ENCODE measurements at regions of chr7 and their contacts with region 1.

Region 1: DNA sequence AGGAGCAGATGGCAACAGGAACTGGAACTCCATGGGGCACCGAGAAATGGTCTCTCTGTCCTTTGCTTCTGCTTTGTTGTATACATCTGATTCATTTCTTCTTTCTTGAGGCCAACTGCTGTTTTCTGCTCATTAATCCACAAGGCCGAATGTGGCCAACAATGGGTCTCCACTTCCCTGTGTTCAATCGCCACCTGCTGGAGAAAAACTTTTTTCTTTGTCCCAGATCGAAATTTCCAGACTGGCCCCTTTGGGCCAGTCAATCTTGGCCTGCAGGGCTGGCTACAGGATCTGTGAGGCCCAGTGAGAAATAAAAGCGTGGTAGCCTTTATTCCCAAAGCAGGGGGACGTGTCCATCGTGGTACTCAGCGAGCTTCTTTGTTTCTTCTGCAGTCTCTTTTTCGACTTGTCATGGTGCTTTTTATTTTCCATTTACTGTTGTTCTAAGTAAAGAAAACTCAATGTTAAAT is 58.8 kb downstream of the PARP12 start:
- DNase-seq: peak; percentile 19
- H3K4me3 Mint-ChIP-seq: no peak overlapping the region
- H3K27ac Mint-ChIP-seq: no peak overlapping the region
- H3K4me1 Mint-ChIP-seq: no peaks in the 10 kb centered on the region
- H3K27me3 Mint-ChIP-seq: no peaks in the 10 kb centered on the region

Region 2: GRCh38 chr7:139431010-139431409 is 572.9 kb before region 1 on chr7:
- intact Hi-C with region 1: loop called (anchors 10 kb)
- DNase-seq: no peak
- H3K4me3 Mint-ChIP-seq: no peak overlapping the region
- H3K27ac Mint-ChIP-seq: no peak overlapping the region
- H3K4me1 Mint-ChIP-seq: peaks cover 6% of the 10 kb centered on the region
- H3K27me3 Mint-ChIP-seq: no peaks in the 10 kb centered on the region

Region 3: GRCh38 chr7:139502226-139502625 is 501.7 kb before region 1 on chr7:
- intact Hi-C with region 1: loop called (anchors 2 kb)
- DNase-seq: no peak
- H3K4me3 Mint-ChIP-seq: no peak overlapping the region
- H3K27ac Mint-ChIP-seq: no peak overlapping the region
- H3K4me1 Mint-ChIP-seq: peaks cover 3% of the 10 kb centered on the region
- H3K27me3 Mint-ChIP-seq: no peaks in the 10 kb centered on the region

Region 4: DNA sequence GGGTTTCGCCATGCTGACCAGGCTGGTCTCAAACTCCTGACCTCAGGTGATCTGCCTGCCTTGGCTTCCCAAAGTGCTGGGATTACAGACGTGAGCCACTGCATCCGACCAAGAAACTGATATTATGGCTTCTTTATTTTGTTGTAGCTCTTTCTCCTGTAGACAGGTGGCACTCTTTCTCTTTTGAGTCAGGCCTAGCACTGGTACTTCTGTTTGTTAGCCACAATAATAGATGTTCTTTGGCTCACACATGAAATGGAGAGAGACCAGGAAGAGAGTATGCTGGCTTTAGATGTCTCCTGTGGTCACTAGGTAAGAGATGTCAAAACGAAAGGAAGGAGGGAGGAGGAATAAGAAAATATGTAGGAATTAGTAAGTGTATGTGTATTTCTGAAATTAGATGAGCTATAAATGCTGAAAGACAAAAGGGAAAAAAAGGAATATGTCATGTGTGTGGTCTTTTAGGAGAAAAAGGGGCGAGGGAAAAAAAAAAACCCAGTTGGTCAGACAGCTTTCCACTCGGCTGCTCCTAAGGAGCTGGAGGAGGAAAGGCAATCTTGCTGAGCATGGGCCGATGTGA is 401.7 kb before region 1 on chr7:
- intact Hi-C with region 1: loop called (anchors 1 kb)
- DNase-seq: no peak
- H3K4me3 Mint-ChIP-seq: no peak overlapping the region
- H3K27ac Mint-ChIP-seq: no peak overlapping the region
- H3K4me1 Mint-ChIP-seq: no peaks in the 10 kb centered on the region
- H3K27me3 Mint-ChIP-seq: no peaks in the 10 kb centered on the region

Region 5: GRCh38 chr7:139620676-139621344 is 383.1 kb before region 1 on chr7:
- intact Hi-C with region 1: loop called (anchors 1 kb)
- DNase-seq: peak; percentile 51
- H3K4me3 Mint-ChIP-seq: no peak overlapping the region
- H3K27ac Mint-ChIP-seq: no peak overlapping the region
- H3K4me1 Mint-ChIP-seq: peaks cover 18% of the 10 kb centered on the region
- H3K27me3 Mint-ChIP-seq: no peaks in the 10 kb centered on the region

Region 6: DNA sequence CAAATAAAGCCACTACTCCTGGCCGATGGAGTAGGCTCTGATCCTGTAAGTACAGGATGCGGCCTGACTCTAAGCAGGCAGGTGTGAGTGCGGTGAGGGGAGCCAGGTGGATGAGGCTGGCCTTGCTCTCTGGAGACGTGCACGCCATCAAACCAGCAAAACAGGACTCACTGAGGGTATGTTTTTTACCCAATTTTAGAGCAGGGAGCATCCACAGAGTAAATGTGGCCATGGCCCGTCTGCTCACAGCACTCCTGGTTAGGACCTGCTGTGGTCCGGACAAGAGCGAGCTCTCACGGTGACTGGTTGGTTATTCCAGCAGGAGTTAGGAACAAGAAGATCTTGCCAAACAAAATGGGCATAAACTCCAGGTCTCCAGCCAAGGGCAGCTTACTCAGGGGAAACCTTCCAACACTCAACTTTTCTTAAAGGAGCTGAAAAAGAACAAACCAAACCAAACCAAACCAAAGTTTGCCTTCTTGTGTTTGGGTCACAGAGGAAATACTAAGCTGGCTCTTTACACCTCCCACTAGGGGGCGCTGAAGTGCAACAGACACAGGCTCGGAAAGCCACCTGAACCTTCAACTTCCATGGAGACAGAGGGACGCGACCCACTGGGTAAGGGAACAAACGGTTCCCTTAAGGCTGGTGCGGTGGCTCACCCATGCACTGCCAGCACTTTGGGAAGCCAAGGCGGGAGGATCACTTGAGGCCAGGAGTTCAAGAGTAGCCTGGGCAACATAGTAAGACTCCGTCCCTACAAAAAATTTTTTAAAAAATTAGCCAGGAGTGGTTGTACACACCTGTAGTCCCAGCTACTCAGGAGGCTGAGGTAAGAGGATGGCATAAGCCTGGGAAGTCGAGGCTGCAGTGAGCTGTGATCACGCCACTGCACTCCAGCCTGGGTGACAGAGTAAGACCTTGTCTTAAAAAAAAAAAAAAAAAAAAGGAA is 358.1 kb before region 1 on chr7:
- intact Hi-C with region 1: loop called (anchors 2 kb)
- DNase-seq: peak; percentile 69
- H3K4me3 Mint-ChIP-seq: no peak overlapping the region
- H3K27ac Mint-ChIP-seq: no peak overlapping the region
- H3K4me1 Mint-ChIP-seq: peaks cover 44% of the 10 kb centered on the region
- H3K27me3 Mint-ChIP-seq: no peaks in the 10 kb centered on the region

Measured in activated T-helper 2 cell treated with anti-CD3 and anti-CD28 coated beads, Interferon-gamma antibody, Interleukin-2, Interleukin-4, amounts not matched to agents 10 μg/mL and 5 μg/mL and 100 μg/mL, durations not matched to agents 14 hours and 24 hours and 36 hours (primary cell).